ENCODE measurements at regions of chr10 and their contacts with region 1.

Region 1: GRCh38 chr10:96374985-96375830 is 16.4 kb upstream of the OPALIN start:
- DNase-seq: peak; percentile 84
- ATAC-seq: peak; percentile 89
- H3K4me3 Mint-ChIP-seq: peak overlapping the region; percentile 61
- H3K27ac Mint-ChIP-seq: no peak overlapping the region
- H3K4me1 Mint-ChIP-seq: peaks cover 11% of the 10 kb centered on the region
- H3K27me3 Mint-ChIP-seq: peaks cover 7% of the 10 kb centered on the region

Region 2: GRCh38 chr10:96272316-96273280 is 102.6 kb before region 1 on chr10:
- CTCF ChIA-PET with region 1: no interaction called
- POLR2A ChIA-PET with region 1: no interaction called
- DNase-seq: no peak
- ATAC-seq: no peak
- H3K4me3 Mint-ChIP-seq: no peak overlapping the region
- H3K27ac Mint-ChIP-seq: no peak overlapping the region
- H3K4me1 Mint-ChIP-seq: no peaks in the 10 kb centered on the region
- H3K27me3 Mint-ChIP-seq: peaks cover 16% of the 10 kb centered on the region

Region 3: GRCh38 chr10:96358851-96359540 is 16.2 kb before region 1 on chr10 and contains the start of gene OPALIN:
- CTCF ChIA-PET with region 1: interaction called, 12 read pairs
- POLR2A ChIA-PET with region 1: no interaction called
- DNase-seq: no peak
- ATAC-seq: no peak
- H3K4me3 Mint-ChIP-seq: no peak within 1 kb of the TSS
- H3K27ac Mint-ChIP-seq: no peak within 1 kb of the TSS
- H3K4me1 Mint-ChIP-seq: no peaks in the 10 kb centered on the region
- H3K27me3 Mint-ChIP-seq: peaks cover 3% of the 10 kb centered on the region
- total RNA-seq, gene OPALIN: not detected

Region 4: GRCh38 chr10:96387161-96387560 is 12.0 kb after region 1 on chr10:
- CTCF ChIA-PET with region 1: interaction called, 14 read pairs
- POLR2A ChIA-PET with region 1: no interaction called
- DNase-seq: no peak
- ATAC-seq: no peak
- H3K4me3 Mint-ChIP-seq: no peak overlapping the region
- H3K27ac Mint-ChIP-seq: no peak overlapping the region
- H3K4me1 Mint-ChIP-seq: no peaks in the 10 kb centered on the region
- H3K27me3 Mint-ChIP-seq: peaks cover 14% of the 10 kb centered on the region

Region 5: DNA sequence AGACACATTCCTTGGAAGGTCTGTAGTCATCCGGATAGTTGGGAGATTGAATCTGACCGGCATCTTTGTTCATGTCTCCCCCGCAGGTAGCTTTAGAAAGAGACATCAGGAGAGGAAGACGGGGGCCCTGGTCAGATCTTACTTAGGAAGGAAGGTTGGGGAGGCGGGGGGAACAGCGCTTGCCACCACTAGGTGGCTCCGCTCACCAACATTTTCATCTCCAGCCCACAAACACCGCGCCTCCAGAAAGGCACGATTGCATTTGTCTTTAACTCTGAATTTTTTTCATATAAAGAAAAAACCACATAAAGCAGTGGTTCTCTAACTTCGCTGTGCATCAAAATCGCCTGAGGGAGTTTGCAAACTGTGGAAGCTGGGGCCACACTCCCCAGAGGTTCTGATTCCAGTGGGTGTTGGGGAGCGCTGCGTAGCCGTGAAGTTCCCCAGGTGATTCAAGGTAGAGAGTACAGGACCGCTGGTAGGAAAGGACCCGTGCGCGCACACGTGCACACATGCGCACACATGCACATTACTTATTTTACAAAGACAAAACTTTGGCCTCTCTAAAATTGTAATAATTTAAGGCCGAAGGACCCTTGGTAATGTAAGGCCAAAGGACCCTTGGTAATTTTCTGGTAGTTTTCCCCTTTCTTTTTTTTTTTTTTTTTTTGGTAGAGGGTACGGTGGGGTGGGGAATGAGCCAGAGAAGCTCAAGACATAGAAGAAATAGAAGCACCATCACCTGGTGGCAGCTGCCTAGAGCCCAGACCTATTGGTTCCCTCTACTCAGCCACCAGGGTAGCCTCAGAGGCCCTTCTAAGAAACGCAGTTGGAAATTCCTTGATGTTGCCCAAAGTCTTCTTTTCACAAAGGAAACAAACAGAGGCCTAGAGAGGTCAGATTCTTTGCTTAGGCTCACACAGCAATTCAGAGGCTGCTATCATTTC is 21.0 kb after region 1 on chr10:
- CTCF ChIA-PET with region 1: interaction called, 11 read pairs
- POLR2A ChIA-PET with region 1: no interaction called
- DNase-seq: peak; percentile 77
- ATAC-seq: peak; percentile 93
- H3K4me3 Mint-ChIP-seq: no peak overlapping the region
- H3K27ac Mint-ChIP-seq: no peak overlapping the region
- H3K4me1 Mint-ChIP-seq: peaks cover 7% of the 10 kb centered on the region
- H3K27me3 Mint-ChIP-seq: peaks cover 23% of the 10 kb centered on the region

Region 6: GRCh38 chr10:96513698-96514561 is 138.7 kb after region 1 on chr10 and contains the start of gene TLL2:
- CTCF ChIA-PET with region 1: interaction called, 16 read pairs
- POLR2A ChIA-PET with region 1: no interaction called
- DNase-seq: peak; percentile 65
- ATAC-seq: peak; percentile 83
- H3K4me3 Mint-ChIP-seq: peak within 1 kb of the TSS; percentile 51
- H3K27ac Mint-ChIP-seq: no peak within 1 kb of the TSS
- H3K4me1 Mint-ChIP-seq: peaks cover 21% of the 10 kb centered on the region
- H3K27me3 Mint-ChIP-seq: peaks cover 46% of the 10 kb centered on the region
- total RNA-seq, gene TLL2: 0.13 TPM in 1 of 2 experiments, not detected in the other

Measured in activated CD8-positive, alpha-beta T cell treated with anti-CD3 and anti-CD28 coated beads, Interleukin-2, amount 10 ng/mL, durations not matched to agents 7 days and 5 days (primary cell).